ENCODE measurements at regions of chr6 and their contacts with region 1.

Region 1: GRCh38 chr6:50128420-50129005 is 78.8 kb upstream of the DEFB112 start:
- DNase-seq: no peak
- H3K4me3 ChIP-seq: no peak overlapping the region
- H3K27ac ChIP-seq: no peak overlapping the region
- H3K4me1 ChIP-seq: no peaks in the 10 kb centered on the region
- H3K27me3 ChIP-seq: no peaks in the 10 kb centered on the region
- CTCF ChIP-seq: peak in 2 of 4 experiments; percentile 16 to 45
- EP300 ChIP-seq: no peak
- POLR2A ChIP-seq: no peak

Region 2: GRCh38 chr6:49939993-49940498 is 188.5 kb before region 1 on chr6:
- intact Hi-C with region 1: no loop called
- DNase-seq: no peak
- H3K4me3 ChIP-seq: no peak overlapping the region
- H3K27ac ChIP-seq: no peak overlapping the region
- H3K4me1 ChIP-seq: no peaks in the 10 kb centered on the region
- H3K27me3 ChIP-seq: no peaks in the 10 kb centered on the region
- CTCF ChIP-seq: no peak
- EP300 ChIP-seq: no peak
- POLR2A ChIP-seq: no peak

Region 3: GRCh38 chr6:50591135-50591534 is 462.6 kb after region 1 on chr6:
- intact Hi-C with region 1: loop called (anchors 5 kb)
- DNase-seq: no peak
- H3K4me3 ChIP-seq: no peak overlapping the region
- H3K27ac ChIP-seq: no peak overlapping the region
- H3K4me1 ChIP-seq: no peaks in the 10 kb centered on the region
- H3K27me3 ChIP-seq: no peaks in the 10 kb centered on the region
- CTCF ChIP-seq: no peak
- EP300 ChIP-seq: no peak
- POLR2A ChIP-seq: no peak

Region 4: DNA sequence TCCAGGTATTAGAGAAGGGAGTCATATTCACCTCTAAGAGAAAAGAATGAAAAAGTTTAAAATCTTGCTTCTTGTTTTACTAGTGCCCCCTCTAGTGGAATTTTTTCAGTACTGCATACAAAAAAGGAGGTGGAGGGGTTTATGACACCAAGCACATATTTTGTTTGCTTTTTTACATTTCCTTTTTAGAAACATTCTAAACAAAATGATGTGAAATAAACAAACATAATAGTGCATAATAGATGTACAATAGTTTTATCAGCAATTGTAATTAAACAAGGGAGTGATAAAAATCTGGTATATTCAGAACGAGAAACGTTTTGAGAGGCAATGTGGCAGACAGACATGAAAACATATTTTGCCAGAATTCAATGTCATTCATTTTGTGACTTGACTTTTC is 473.8 kb after region 1 on chr6:
- intact Hi-C with region 1: loop called (anchors 2 kb)
- DNase-seq: no peak
- H3K4me3 ChIP-seq: no peak overlapping the region
- H3K27ac ChIP-seq: no peak overlapping the region
- H3K4me1 ChIP-seq: no peaks in the 10 kb centered on the region
- H3K27me3 ChIP-seq: no peaks in the 10 kb centered on the region
- CTCF ChIP-seq: peak; percentile 19 to 70 (median 38)
- EP300 ChIP-seq: no peak
- POLR2A ChIP-seq: no peak

Region 5: GRCh38 chr6:50791900-50792508 is 663.5 kb after region 1 on chr6:
- intact Hi-C with region 1: loop called (anchors 5 kb)
- DNase-seq: no peak
- H3K4me3 ChIP-seq: no peak overlapping the region
- H3K27ac ChIP-seq: no peak overlapping the region
- H3K4me1 ChIP-seq: no peaks in the 10 kb centered on the region
- H3K27me3 ChIP-seq: no peaks in the 10 kb centered on the region
- CTCF ChIP-seq: peak in 3 of 4 experiments; percentile 16 to 52 (median 27)
- EP300 ChIP-seq: no peak
- POLR2A ChIP-seq: no peak

Measured in sigmoid colon (tissue), 7 donors.